ENCODE measurements at regions of chr5 and their contacts with region 1.

Region 1: GRCh38 chr5:79878721-79879336 is 112.2 kb downstream of the MTX3 start:
- DNase-seq: peak in 1 of 3 donors; percentile 3
- H3K4me3 ChIP-seq: no peak overlapping the region
- H3K4me3 Mint-ChIP-seq: no peak overlapping the region
- H3K27ac ChIP-seq: no peak overlapping the region
- H3K27ac Mint-ChIP-seq: no peak overlapping the region
- H3K4me1 ChIP-seq: no peaks in the 10 kb centered on the region
- H3K4me1 Mint-ChIP-seq: no peaks in the 10 kb centered on the region
- H3K27me3 ChIP-seq: no peaks in the 10 kb centered on the region
- H3K27me3 Mint-ChIP-seq: peaks cover 3 to 5% (median 5%) of the 10 kb centered on the region in 3 donors
- CTCF ChIP-seq: peak; percentile 55

Region 2: DNA sequence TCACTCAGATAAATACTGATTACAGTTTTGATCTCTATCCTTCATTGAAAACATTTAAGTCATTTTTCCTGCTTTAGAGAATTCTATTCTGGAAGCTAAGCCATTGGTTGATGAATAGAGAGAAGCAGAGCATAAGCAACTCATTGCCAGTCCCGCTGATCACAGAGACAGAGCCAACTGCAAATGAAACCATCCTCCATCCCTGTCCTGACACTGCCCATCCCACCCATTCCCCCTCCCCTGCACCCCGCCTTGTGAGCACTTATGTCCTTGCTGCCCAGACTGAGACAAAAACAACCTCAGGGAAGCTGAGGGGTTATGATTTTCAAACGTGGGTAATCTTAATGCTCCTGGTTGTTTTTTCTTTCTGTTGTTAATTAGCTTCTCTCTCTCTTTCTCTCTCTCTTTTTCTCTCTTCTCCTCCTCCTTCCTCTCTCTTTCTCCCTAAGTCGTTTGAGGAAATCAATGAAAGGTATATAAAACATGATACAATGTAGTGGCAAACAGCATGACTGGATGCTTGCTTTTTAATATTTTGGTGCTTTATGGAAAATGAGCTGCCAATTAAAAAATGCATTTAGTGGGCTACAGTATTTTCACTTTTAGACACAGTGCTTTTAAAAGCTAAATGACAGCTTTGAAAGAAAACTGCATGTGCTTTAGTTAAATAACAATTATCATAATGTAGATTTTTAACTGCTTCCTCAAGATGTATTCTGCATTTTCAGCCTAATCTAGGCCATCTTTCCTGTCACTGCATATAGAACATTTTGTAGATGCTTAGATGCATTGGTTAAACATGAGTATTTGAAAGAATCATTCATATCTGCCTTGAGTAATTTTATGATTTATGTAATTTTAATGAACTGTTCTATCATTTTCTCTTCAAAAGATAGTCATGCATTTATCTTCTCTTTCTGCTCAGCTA is 131.9 kb before region 1 on chr5:
- intact Hi-C with region 1: no loop called
- DNase-seq: no peak
- H3K4me3 ChIP-seq: no peak overlapping the region
- H3K4me3 Mint-ChIP-seq: no peak overlapping the region
- H3K27ac ChIP-seq: no peak overlapping the region
- H3K27ac Mint-ChIP-seq: no peak overlapping the region
- H3K4me1 ChIP-seq: no peaks in the 10 kb centered on the region
- H3K4me1 Mint-ChIP-seq: peaks cover 5% of the 10 kb centered on the region
- H3K27me3 ChIP-seq: no peaks in the 10 kb centered on the region
- H3K27me3 Mint-ChIP-seq: peaks cover 0 to 2% (median 0%) of the 10 kb centered on the region in 3 donors
- CTCF ChIP-seq: no peak

Region 3: DNA sequence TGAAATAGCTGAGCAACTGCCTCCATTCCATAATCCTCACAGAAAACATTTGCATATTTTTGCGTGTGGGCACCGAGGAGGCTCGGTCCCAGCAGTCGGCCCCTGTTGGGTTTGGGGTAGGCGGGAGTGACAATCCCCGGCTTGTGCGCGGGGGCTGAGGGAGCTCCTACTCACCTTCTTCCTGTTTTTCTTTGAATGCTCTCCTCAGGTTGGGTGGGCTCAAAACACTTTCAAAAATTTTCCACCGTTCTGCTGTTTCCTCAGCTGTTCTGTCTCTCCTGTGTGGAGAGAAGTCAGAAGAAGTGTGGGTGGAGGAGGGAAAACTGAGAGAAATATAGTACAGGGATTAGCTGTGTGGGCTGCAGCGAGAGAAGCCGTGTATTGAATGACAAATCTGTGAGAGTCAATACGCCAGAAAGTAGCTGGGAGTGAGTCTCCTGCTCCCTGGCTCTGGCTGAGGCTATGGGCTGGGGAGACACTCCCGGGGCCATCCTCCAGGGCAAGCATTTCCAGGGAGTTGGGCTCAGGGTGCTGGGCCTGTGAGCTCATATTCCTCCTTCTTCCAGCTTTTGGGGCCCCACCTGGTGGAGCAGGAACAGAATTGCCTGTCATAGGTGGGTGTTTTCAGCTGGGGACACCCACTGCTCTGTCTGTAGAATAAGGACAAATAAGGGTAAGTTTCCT is 104.5 kb before region 1 on chr5:
- intact Hi-C with region 1: no loop called
- DNase-seq: no peak
- H3K4me3 ChIP-seq: no peak overlapping the region
- H3K4me3 Mint-ChIP-seq: no peak overlapping the region
- H3K27ac ChIP-seq: no peak overlapping the region
- H3K27ac Mint-ChIP-seq: no peak overlapping the region
- H3K4me1 ChIP-seq: no peaks in the 10 kb centered on the region
- H3K4me1 Mint-ChIP-seq: no peaks in the 10 kb centered on the region
- H3K27me3 ChIP-seq: no peaks in the 10 kb centered on the region
- H3K27me3 Mint-ChIP-seq: peaks cover 0 to 1% (median 0%) of the 10 kb centered on the region in 3 donors
- CTCF ChIP-seq: no peak

Region 4: DNA sequence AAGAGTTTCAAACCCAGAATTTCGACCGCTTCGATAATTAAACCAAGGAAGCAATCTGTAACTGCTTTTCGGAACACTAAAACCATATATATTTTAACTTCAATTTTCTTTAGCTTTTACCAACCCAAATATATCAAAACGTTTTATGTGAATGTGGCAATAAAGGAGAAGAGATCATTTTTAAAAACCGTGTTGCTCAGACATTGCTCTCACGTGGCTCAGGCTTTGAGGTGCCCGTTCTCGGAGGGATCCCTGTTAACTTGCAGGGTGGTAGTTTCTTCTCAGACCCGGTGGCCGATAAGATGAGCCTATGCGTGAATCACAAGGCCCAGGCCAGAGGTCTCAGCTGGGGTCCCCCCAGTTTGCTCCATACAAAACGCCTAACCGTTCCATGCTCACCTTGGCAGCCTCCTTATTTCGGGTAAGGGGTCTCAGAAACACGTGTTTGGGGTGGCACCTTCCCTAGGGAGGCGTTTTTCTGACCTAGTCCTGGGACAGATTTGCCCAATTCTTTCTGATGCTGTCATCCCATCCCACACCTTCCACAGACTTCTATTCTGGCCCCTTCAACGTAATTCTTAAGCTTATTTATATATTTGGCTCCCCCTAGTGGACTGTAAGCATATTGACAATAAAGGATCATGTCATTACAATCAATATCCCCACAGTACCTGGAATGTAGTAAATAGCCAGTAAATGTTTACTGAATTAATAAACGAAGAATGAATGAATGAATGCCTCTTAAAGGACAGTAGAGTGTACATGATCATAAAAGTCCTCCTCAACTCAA is 204.5 kb after region 1 on chr5:
- intact Hi-C with region 1: loop called in 1 of 2 experiments (anchors 5 kb)
- DNase-seq: peak; percentile 23 to 63 (median 54)
- H3K4me3 ChIP-seq: peak overlapping the region; percentile 19 to 70 (median 44)
- H3K4me3 Mint-ChIP-seq: peak overlapping the region; percentile 78 to 86
- H3K27ac ChIP-seq: no peak overlapping the region
- H3K27ac Mint-ChIP-seq: peak overlapping the region in 4 of 7 donors; percentile 56 to 87 (median 78)
- H3K4me1 ChIP-seq: peaks cover 10 to 12% of the 10 kb centered on the region in 2 donors
- H3K4me1 Mint-ChIP-seq: peaks cover 12% of the 10 kb centered on the region
- H3K27me3 ChIP-seq: no peaks in the 10 kb centered on the region
- H3K27me3 Mint-ChIP-seq: peaks cover 0 to 2% (median 0%) of the 10 kb centered on the region in 3 donors
- CTCF ChIP-seq: peak; percentile 81

Measured in CD14-positive monocyte (primary cell).